ENCODE measurements at regions of chr18 and their contacts with region 1.

Region 1: DNA sequence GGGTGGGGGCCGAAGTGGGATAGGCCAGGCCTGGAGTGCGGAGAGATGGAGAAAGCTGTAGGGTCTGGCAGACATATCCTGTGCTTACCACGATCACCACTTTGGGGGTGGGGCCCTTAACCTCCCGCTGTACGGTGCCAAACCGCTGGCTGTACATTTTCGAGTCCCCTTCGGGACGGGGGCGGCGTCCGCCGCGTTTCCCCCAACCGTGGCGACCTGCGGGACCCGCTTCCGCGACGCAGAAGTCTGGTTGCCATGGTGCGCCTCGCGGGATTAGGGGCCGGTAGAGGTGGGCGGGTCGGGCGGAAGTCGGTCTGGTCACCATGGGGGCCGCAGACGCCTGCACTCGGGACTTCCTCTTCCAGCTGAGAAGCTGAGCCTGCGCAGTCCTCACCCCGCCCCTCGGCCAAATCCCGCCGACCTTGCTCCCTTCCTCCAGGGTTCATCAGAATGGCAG is at the start of gene CFAP53:
- DNase-seq: peak; percentile 51 to 83 (median 69)
- ATAC-seq: peak; percentile 88
- H3K4me3 ChIP-seq: peak within 1 kb of the TSS; percentile 59
- H3K4me3 Mint-ChIP-seq: peak within 1 kb of the TSS; percentile 79 to 94 (median 90)
- H3K27ac ChIP-seq: peak within 1 kb of the TSS; percentile 50
- H3K27ac Mint-ChIP-seq: peak within 1 kb of the TSS; percentile 57 to 92 (median 81)
- H3K4me1 ChIP-seq: peaks cover 4 to 5% of the 10 kb centered on the region in 2 donors
- H3K4me1 Mint-ChIP-seq: peaks cover 9 to 29% (median 25%) of the 10 kb centered on the region in 7 donors
- H3K27me3 ChIP-seq: no peaks in the 10 kb centered on the region
- H3K27me3 Mint-ChIP-seq: peaks cover 0 to 17% (median 0%) of the 10 kb centered on the region in 5 donors
- total RNA-seq, gene CFAP53: 0.19 to 1.8 (median 0.64) TPM

Region 2: DNA sequence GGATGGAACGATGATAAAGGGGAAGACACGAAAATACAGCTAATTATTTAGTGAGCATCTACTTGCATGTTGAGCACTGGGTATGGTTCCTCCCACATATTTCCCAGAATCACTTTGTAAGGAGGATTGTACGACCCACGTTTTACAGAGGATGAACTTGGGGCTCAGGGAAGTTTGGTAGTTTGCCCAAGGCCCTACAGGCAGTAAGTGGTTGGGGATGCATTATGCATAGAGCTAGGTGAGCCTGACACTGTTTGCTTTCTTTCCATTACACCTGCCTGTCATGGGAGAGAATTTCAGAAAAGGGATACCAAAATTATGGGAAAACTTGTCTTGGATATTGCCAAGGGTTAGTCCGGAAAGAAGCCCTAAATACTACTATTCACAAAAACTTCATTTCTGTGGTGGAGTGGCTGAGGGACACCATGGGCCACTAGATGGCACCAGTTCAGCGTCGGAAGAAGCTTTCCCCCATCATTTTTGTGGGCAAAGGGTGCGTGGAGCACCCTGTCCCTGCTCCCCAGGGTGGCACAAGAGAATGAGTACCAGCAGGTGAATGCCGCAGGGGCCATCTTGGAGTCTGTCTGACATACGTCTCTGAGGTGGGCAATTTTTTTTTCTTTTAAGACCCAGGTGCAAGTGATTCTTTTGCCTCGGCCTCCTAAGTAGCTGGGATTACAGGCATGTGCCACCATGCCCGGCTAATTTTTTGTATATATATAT is 755.7 kb before region 1 on chr18:
- CTCF ChIA-PET with region 1: no interaction called
- POLR2A ChIA-PET with region 1: no interaction called
- intact Hi-C with region 1: loop called in 1 of 2 experiments (anchors 2 kb)
- DNase-seq: peak in 7 of 9 donors; percentile 31 to 56 (median 46)
- ATAC-seq: peak; percentile 85
- H3K4me3 ChIP-seq: no peak overlapping the region
- H3K4me3 Mint-ChIP-seq: no peak overlapping the region
- H3K27ac ChIP-seq: no peak overlapping the region
- H3K27ac Mint-ChIP-seq: no peak overlapping the region
- H3K4me1 ChIP-seq: no peaks in the 10 kb centered on the region
- H3K4me1 Mint-ChIP-seq: no peaks in the 10 kb centered on the region
- H3K27me3 ChIP-seq: no peaks in the 10 kb centered on the region
- H3K27me3 Mint-ChIP-seq: peaks cover 8 to 22% (median 15%) of the 10 kb centered on the region in 5 donors

Region 3: GRCh38 chr18:50218432-50219197 is 47.7 kb before region 1 on chr18:
- CTCF ChIA-PET with region 1: no interaction called
- POLR2A ChIA-PET with region 1: no interaction called
- intact Hi-C with region 1: loop called in 1 of 2 experiments (anchors 2 kb)
- DNase-seq: peak in 4 of 9 donors; percentile 19 to 37 (median 28)
- ATAC-seq: peak; percentile 54
- H3K4me3 ChIP-seq: no peak overlapping the region
- H3K4me3 Mint-ChIP-seq: no peak overlapping the region
- H3K27ac ChIP-seq: no peak overlapping the region
- H3K27ac Mint-ChIP-seq: no peak overlapping the region
- H3K4me1 ChIP-seq: no peaks in the 10 kb centered on the region
- H3K4me1 Mint-ChIP-seq: no peaks in the 10 kb centered on the region
- H3K27me3 ChIP-seq: no peaks in the 10 kb centered on the region
- H3K27me3 Mint-ChIP-seq: peaks cover 21 to 47% (median 29%) of the 10 kb centered on the region in 5 donors

Region 4: GRCh38 chr18:50307738-50308470 is 41.6 kb after region 1 on chr18:
- CTCF ChIA-PET with region 1: no interaction called
- POLR2A ChIA-PET with region 1: interaction called, 4 read pairs
- intact Hi-C with region 1: loop called (anchors 1 kb)
- DNase-seq: peak; percentile 70 to 93 (median 89)
- ATAC-seq: peak; percentile 96
- H3K4me3 ChIP-seq: peak overlapping the region; percentile 45
- H3K4me3 Mint-ChIP-seq: peak overlapping the region; percentile 76 to 97 (median 92)
- H3K27ac ChIP-seq: peak overlapping the region; percentile 65
- H3K27ac Mint-ChIP-seq: peak overlapping the region; percentile 52 to 93 (median 82)
- H3K4me1 ChIP-seq: peaks cover 0 to 8% of the 10 kb centered on the region in 2 donors
- H3K4me1 Mint-ChIP-seq: peaks cover 0 to 20% (median 16%) of the 10 kb centered on the region in 7 donors
- H3K27me3 ChIP-seq: peaks cover 0 to 3% of the 10 kb centered on the region in 2 donors
- H3K27me3 Mint-ChIP-seq: peaks cover 0 to 35% (median 19%) of the 10 kb centered on the region in 5 donors

Region 5: DNA sequence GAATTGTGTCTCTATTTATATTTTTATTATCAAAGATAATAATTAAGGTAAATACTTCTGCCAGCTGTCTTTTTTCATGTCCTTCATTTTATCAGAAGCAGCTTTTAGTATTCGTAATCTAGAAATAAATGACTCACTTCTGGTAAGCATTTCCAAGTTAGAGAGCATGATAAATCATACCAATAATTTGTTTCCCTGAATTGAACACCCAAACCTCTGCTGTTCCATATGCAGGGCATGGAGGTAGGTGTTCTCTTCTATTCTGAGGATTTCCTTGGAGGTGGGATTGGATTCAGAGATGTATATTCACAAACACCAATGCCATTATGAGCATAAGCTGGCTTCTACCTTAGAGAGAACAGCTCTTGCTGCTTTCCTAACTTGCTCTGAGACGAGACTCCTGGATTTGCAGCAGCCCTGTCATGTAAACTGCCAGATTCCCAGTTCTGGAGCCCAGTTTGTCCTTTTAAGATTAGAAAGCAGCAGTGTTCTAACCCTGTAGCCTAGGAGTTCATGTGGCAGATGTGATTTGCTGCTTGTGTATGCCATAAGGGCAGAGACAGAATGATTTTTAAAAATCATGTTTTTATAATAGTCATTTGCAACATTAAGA is 156.1 kb after region 1 on chr18:
- CTCF ChIA-PET with region 1: no interaction called
- POLR2A ChIA-PET with region 1: no interaction called
- intact Hi-C with region 1: no loop called
- DNase-seq: no peak
- ATAC-seq: no peak
- H3K4me3 ChIP-seq: no peak overlapping the region
- H3K4me3 Mint-ChIP-seq: no peak overlapping the region
- H3K27ac ChIP-seq: no peak overlapping the region
- H3K27ac Mint-ChIP-seq: no peak overlapping the region
- H3K4me1 ChIP-seq: no peaks in the 10 kb centered on the region
- H3K4me1 Mint-ChIP-seq: no peaks in the 10 kb centered on the region
- H3K27me3 ChIP-seq: no peaks in the 10 kb centered on the region
- H3K27me3 Mint-ChIP-seq: peaks cover 12 to 33% (median 23%) of the 10 kb centered on the region in 5 donors

Measured in naive thymus-derived CD4-positive, alpha-beta T cell (primary cell).